Activated naive CD4-positive, alpha-beta T cell treated with anti-CD3 and anti-CD28 coated beads for 36 hours (primary cell): ENCODE measurements at regions of chr12 and their contacts with region 1.

Region 1: DNA sequence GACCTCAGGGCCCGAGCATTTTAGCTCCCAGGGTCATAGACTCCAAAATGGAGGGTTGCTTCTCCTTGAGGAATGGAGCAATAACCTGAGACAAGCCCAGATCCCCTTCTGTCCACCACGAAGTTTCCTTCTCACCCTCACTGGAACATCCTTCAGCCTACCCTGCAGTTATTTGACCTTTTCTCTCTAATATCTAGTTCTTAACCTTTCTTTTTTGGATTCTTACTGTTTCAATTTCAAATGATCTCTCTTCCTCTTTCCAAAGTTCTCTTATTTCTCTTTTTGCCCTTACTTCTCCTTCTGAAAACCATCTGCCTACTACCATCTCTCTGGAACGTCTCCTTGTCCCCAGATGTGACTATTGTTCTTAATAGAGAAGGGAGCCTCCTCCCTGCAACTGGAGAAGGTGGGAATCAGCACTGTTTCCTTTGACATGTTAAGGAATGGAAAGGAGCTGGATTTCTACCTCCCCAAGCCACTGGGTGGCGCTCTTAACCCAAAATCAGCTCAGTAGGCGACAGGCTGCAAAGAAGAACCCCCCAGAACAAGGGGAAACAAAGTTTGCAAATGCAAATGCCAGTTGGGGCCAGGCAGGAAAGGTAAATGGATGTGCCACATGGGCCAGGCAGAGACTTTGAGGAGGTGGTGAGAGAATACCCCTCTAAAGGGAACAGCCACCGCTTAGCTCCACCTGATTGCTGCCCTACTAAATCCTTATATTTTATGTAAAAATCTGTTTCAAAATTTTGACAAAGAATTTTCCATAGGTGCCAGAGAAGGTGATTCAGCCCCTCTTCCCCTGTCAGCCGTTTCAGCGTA is 22.4 kb upstream of the PDE1B start:
- DNase-seq: peak; percentile 72
- H3K4me3 Mint-ChIP-seq: no peak overlapping the region
- H3K27ac Mint-ChIP-seq: peak overlapping the region; percentile 46
- H3K4me1 Mint-ChIP-seq: peaks cover 22% of the 10 kb centered on the region
- H3K27me3 Mint-ChIP-seq: no peaks in the 10 kb centered on the region

Region 2: GRCh38 chr12:54398995-54399793 is 127.8 kb before region 1 on chr12:
- CTCF ChIA-PET with region 1: interaction called, 16 read pairs
- intact Hi-C with region 1: no loop called
- DNase-seq: peak; percentile 95
- H3K4me3 Mint-ChIP-seq: no peak overlapping the region
- H3K27ac Mint-ChIP-seq: peak overlapping the region; percentile 21
- H3K4me1 Mint-ChIP-seq: peaks cover 8% of the 10 kb centered on the region
- H3K27me3 Mint-ChIP-seq: no peaks in the 10 kb centered on the region

Region 3: GRCh38 chr12:54497883-54498282 is 29.1 kb before region 1 on chr12:
- CTCF ChIA-PET with region 1: interaction called, 7 read pairs
- intact Hi-C with region 1: loop called (anchors 1 kb)
- DNase-seq: no peak
- H3K4me3 Mint-ChIP-seq: peak overlapping the region; percentile 95
- H3K27ac Mint-ChIP-seq: peak overlapping the region; percentile 97
- H3K4me1 Mint-ChIP-seq: peaks cover 36% of the 10 kb centered on the region
- H3K27me3 Mint-ChIP-seq: no peaks in the 10 kb centered on the region

Region 4: GRCh38 chr12:54560374-54560858 is 33.4 kb after region 1 on chr12:
- CTCF ChIA-PET with region 1: interaction called, 6 read pairs
- intact Hi-C with region 1: loop called (anchors 1 kb)
- DNase-seq: peak; percentile 97
- H3K4me3 Mint-ChIP-seq: peak overlapping the region; percentile 72
- H3K27ac Mint-ChIP-seq: peak overlapping the region; percentile 80
- H3K4me1 Mint-ChIP-seq: peaks cover 31% of the 10 kb centered on the region
- H3K27me3 Mint-ChIP-seq: peaks cover 3% of the 10 kb centered on the region

Region 5: DNA sequence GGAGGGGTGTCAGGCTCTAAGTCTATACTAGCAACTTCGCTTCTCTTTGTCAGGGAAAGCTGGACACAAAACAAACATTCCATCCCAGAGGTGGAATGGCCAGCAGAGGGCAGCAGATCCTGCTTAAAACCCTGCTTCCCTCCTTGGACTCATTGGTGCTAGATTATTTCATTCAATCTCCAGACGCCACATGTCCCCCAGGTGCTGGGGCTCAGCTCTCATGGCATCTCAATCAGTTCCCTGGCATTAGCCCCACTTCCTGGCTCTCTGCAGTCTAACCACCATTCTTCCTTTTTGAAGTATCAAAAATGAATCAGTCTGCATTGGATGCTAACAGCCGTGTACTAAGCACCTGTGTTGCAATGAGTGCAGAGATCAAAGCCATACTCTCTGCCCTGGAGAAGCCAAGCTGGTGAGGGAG is 69.5 kb after region 1 on chr12:
- CTCF ChIA-PET with region 1: interaction called, 5 read pairs
- intact Hi-C with region 1: loop called (anchors 5 kb)
- DNase-seq: peak; percentile 77
- H3K4me3 Mint-ChIP-seq: no peak overlapping the region
- H3K27ac Mint-ChIP-seq: no peak overlapping the region
- H3K4me1 Mint-ChIP-seq: peaks cover 5% of the 10 kb centered on the region
- H3K27me3 Mint-ChIP-seq: peaks cover 2% of the 10 kb centered on the region

Region 6: DNA sequence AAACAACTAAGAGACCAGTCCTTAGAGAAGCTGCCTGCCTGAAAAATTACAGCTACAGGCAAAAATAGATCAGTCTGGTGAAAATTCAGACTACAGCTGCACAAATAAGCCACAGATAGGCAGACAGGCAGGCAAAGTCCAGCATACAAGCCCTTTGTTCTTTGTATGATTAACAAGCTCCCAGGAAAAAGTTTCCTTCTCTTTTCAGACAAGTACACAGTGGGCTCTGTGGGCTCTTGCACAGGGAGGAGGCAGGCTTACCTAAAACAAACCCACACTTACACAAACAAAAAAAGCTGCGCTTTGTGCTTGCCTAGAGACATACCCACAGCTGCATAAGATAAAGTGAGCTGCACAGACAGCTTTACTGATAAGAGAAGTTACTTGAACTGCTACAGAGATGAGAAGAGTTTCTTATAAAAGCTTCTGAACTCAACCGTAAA is 972.8 kb after region 1 on chr12:
- CTCF ChIA-PET with region 1: no interaction called
- intact Hi-C with region 1: no loop called
- DNase-seq: no peak
- H3K4me3 Mint-ChIP-seq: no peak overlapping the region
- H3K27ac Mint-ChIP-seq: no peak overlapping the region
- H3K4me1 Mint-ChIP-seq: no peaks in the 10 kb centered on the region
- H3K27me3 Mint-ChIP-seq: peaks cover 1% of the 10 kb centered on the region